Activated CD4-positive, alpha-beta T cell treated with anti-CD3 and anti-CD28 coated beads, Interleukin-2, amount 10 ng/mL, durations not matched to agents 24 days and 14 days (primary cell): ENCODE measurements at regions of chr2 and their contacts with region 1.

Region 1: DNA sequence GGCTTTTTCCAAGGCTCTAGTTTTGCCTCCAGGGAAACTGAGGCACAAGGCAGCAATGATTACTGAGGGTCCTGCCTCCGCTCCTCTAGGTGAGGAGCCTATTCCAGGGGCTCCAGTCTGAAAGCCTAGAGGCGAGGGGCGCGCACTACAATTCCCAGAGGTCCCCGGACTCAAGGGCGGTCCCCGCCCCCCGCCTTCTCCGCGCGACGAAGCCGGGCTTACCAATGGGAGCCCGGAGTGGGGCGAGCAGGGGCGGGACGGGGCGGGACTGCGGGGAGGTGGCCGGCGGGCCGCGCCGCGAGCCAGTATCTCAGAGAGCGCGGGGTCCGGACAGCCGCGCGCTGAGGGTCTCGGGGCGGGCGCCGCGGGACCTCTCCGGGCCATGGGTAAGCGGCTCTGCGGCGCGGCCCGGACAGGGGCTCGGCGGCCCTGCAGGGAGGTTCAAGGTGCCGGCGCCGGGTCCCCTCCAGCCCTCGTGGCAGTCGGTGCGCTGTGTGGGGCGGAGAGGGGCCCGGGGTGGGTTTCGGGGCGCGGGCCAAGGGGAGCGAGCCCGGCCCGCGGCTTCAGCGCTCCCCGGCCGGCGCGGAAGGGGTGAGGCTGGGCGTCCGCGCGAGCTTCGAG is at the start of gene ARID5A:
- DNase-seq: peak; percentile 97
- H3K4me3 Mint-ChIP-seq: peak within 1 kb of the TSS; percentile 93
- H3K27ac Mint-ChIP-seq: peak within 1 kb of the TSS; percentile 94
- H3K4me1 Mint-ChIP-seq: peaks cover 54% of the 10 kb centered on the region
- H3K27me3 Mint-ChIP-seq: no peaks in the 10 kb centered on the region
- total RNA-seq, gene ARID5A: 214 and 229 TPM in 2 replicates

Region 2: DNA sequence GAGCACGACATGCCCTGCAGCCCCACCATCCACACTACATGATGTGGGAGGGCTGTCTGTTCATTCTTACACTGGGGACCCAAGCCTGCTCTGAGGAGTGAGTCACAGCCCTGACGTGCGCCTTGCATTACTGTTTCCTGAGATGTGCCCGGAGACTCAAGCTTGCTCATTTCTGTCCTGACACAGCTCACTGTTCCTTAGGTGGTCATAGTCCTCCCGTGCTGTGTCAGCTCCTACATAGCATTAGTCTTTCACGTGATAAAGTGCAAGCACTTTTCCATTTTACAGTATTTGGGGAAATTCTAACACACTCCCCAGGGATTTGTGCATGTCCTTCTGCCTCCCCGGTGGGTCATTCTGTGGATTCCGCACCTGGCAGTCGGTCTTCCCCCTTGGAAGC is 1005.8 kb before region 1 on chr2:
- intact Hi-C with region 1: loop called (anchors 10 kb)
- DNase-seq: peak; percentile 64
- H3K4me3 Mint-ChIP-seq: peak overlapping the region; percentile 53
- H3K27ac Mint-ChIP-seq: peak overlapping the region; percentile 89
- H3K4me1 Mint-ChIP-seq: peaks cover 37% of the 10 kb centered on the region
- H3K27me3 Mint-ChIP-seq: no peaks in the 10 kb centered on the region

Region 3: DNA sequence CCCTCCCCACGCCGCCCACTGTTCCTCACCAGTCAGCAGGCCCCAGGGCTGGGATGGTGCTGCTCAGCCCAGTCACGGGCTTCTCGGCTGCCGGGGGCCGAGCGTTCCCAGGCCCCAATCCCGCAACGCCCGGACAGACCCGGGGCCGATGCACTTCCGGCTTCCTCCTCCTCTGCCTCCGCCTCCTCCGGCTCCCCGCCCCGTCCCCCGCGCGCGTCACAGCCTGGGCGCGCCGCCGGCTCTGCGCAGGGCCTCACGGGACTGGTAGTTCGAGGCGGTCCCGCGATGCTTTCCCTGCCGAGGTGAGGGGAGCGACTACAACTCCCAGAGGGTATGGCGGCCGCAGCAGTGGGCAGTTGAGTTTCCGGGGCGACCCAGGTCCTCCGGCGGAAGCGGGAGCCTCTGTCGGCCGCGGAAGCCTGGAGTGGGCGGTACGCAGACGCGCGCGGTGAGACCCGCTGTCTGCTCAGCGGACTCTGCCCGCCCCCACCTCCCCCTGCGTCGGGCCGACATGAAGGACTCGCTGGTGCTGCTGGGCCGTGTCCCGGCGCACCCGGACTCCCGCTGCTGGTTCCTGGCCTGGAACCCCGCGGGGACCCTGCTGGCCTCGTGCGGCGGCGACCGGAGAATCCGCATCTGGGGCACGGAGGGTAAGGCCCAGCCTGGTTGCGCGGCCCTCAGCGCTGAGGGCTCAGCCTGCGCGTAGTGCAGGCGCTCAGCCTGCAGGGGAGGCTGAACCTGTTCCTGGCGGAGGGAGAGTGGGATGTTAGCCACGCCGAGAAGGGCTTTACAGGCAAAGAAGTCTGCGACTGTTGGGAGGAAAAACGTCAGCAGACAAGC is 270.5 kb before region 1 on chr2 and contains the starts of genes CIAO1 and TMEM127:
- intact Hi-C with region 1: loop called (anchors 5 kb)
- DNase-seq: peak; percentile 100
- H3K4me3 Mint-ChIP-seq: peak within 1 kb of the TSS; percentile 99
- H3K27ac Mint-ChIP-seq: peak within 1 kb of the TSS; percentile 98
- H3K4me1 Mint-ChIP-seq: peaks cover 38% of the 10 kb centered on the region
- H3K27me3 Mint-ChIP-seq: no peaks in the 10 kb centered on the region
- total RNA-seq, gene CIAO1: 105 and 110 TPM in 2 replicates
- total RNA-seq, gene TMEM127: 31.6 and 33.1 TPM in 2 replicates

Region 4: DNA sequence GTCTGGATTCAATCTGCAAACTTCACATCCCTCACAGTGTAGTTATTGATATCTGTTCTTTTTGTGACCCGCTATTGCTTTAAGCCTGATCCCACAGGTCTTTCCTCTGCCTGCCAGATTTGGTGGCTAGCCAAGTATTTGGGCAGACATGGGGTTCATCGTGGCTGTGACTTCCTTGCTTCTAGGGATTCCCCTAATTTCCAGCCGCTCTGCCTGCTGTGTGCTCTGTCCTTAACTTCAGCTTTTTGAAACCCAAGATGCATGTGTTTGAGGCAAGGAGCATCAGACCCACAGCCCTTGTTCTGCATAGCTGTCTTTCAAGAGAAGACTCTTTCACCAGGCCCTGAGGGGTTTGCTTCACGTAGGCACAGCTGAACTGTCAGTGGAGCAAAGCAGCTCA is 146.8 kb before region 1 on chr2:
- intact Hi-C with region 1: no loop called
- DNase-seq: no peak
- H3K4me3 Mint-ChIP-seq: no peak overlapping the region
- H3K27ac Mint-ChIP-seq: no peak overlapping the region
- H3K4me1 Mint-ChIP-seq: peaks cover 8% of the 10 kb centered on the region
- H3K27me3 Mint-ChIP-seq: peaks cover 2% of the 10 kb centered on the region

Region 5: GRCh38 chr2:96485751-96486651 is 50.6 kb before region 1 on chr2:
- intact Hi-C with region 1: loop called (anchors 1 kb)
- DNase-seq: peak; percentile 97
- H3K4me3 Mint-ChIP-seq: peak overlapping the region; percentile 92
- H3K27ac Mint-ChIP-seq: peak overlapping the region; percentile 98
- H3K4me1 Mint-ChIP-seq: peaks cover 55% of the 10 kb centered on the region
- H3K27me3 Mint-ChIP-seq: peaks cover 2% of the 10 kb centered on the region

Region 6: DNA sequence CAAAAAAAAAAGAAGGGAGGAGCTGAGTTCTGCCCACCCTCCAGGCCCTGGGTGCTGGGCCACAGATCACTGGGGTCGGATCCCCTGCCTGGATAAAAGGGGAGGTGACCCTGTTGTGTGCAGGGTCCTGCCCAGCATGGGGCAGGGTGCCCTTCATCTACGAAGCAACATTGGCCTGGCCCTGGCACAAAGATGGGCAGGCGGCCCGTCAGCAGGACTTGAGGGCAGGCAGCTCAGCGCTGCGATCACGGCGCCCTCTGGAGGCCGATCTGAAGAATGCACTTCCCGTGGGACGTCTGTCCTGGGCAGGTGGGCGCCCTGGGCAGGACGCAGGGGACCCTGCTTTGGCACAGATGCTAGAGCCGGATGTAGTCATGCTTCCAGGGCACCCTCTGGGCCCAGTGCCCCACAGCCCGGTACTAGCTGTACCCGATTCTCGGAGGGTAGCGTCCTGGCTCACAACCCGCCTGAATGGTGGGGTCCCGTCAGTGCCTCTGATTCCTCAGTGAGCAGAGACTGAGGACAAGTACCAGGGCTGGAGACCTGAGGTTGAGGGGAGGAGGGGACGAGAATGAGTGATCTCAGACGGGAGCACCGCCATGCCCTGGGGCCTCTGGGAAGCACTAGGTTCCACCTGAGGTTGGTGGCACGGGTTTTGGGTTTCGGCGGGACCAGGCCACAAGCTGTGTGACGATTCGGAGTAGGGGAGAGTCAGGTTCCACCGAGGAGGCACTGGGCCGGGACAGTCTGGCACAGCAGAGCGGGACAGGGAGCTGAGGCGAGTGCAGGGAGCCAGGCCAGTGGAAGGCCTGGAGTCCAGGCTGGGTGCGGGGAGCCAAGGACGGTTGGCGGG is 18.0 kb after region 1 on chr2:
- intact Hi-C with region 1: loop called (anchors 1 kb)
- DNase-seq: peak; percentile 91
- H3K4me3 Mint-ChIP-seq: no peak overlapping the region
- H3K27ac Mint-ChIP-seq: peak overlapping the region; percentile 37
- H3K4me1 Mint-ChIP-seq: peaks cover 25% of the 10 kb centered on the region
- H3K27me3 Mint-ChIP-seq: no peaks in the 10 kb centered on the region

Region 7: GRCh38 chr2:96638144-96639121 is 101.9 kb after region 1 on chr2 and contains the start of gene KANSL3:
- intact Hi-C with region 1: loop called (anchors 2 kb)
- DNase-seq: peak; percentile 98
- H3K4me3 Mint-ChIP-seq: peak within 1 kb of the TSS; percentile 97
- H3K27ac Mint-ChIP-seq: peak within 1 kb of the TSS; percentile 97
- H3K4me1 Mint-ChIP-seq: peaks cover 24% of the 10 kb centered on the region
- H3K27me3 Mint-ChIP-seq: peaks cover 3% of the 10 kb centered on the region
- total RNA-seq, gene KANSL3: 45.5 and 46.5 TPM in 2 replicates

Region 8: GRCh38 chr2:96816128-96816835 is 279.7 kb after region 1 on chr2 and contains the start of gene CNNM3:
- intact Hi-C with region 1: loop called (anchors 5 kb)
- DNase-seq: peak; percentile 99
- H3K4me3 Mint-ChIP-seq: peak within 1 kb of the TSS; percentile 91
- H3K27ac Mint-ChIP-seq: peak within 1 kb of the TSS; percentile 86
- H3K4me1 Mint-ChIP-seq: peaks cover 50% of the 10 kb centered on the region
- H3K27me3 Mint-ChIP-seq: no peaks in the 10 kb centered on the region
- total RNA-seq, gene CNNM3: 29.4 and 30.5 TPM in 2 replicates